ENCODE measurements at regions of chr3 and their contacts with region 1.

Region 1: GRCh38 chr3:131880948-131881347 is 153.9 kb downstream of the CPNE4 start:
- DNase-seq: no peak
- H3K4me3 ChIP-seq: no peak overlapping the region
- H3K27ac ChIP-seq: no peak overlapping the region
- H3K4me1 ChIP-seq: no peaks in the 10 kb centered on the region
- H3K27me3 ChIP-seq: no peaks in the 10 kb centered on the region
- CTCF ChIP-seq: no peak
- EP300 ChIP-seq: no peak
- POLR2A ChIP-seq: no peak
- RAD21 ChIP-seq: no peak

Region 2: DNA sequence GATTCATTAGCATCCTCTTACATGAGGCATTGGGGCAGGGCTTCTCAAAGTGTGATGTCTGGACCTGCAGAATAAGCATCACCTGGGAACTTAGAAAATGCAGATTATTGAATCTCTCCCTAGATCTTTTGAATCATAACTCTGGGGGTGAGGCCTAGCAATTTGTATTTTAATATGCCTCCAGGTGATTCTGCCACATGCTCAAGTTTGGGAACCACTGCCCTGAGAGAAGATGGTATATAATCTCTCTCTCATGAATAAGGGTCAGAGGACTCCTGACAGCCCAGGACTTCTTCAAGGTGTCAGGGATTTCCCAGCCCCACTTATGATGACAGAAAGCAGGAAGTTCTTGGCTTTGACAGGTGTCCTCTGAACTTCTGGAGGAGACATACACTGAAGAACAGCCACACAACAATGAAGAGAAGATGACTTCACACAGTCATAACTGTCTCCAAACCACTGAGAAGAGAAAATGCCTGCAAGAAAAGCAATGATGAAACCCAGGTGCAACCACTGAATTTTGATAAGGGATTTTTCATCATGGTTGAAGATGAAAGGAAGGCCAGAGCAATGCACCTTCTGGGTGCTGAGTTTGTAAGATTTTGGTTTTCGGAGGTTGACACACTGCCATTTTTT is 166.2 kb before region 1 on chr3:
- CTCF ChIA-PET with region 1: no interaction called
- POLR2A ChIA-PET with region 1: no interaction called
- DNase-seq: no peak
- H3K4me3 ChIP-seq: no peak overlapping the region
- H3K27ac ChIP-seq: no peak overlapping the region
- H3K4me1 ChIP-seq: peaks cover 2 to 6% (median 4%) of the 10 kb centered on the region in 4 experiments; a peak in 5 of 7 replicates
- H3K27me3 ChIP-seq: no peaks in the 10 kb centered on the region
- CTCF ChIP-seq: no peak
- EP300 ChIP-seq: no peak
- POLR2A ChIP-seq: no peak
- RAD21 ChIP-seq: no peak

Region 3: GRCh38 chr3:131892331-131892730 is 11.4 kb after region 1 on chr3:
- CTCF ChIA-PET with region 1: interaction called, 11 read pairs
- POLR2A ChIA-PET with region 1: no interaction called
- DNase-seq: no peak
- H3K4me3 ChIP-seq: no peak overlapping the region
- H3K27ac ChIP-seq: no peak overlapping the region
- H3K4me1 ChIP-seq: no peaks in the 10 kb centered on the region
- H3K27me3 ChIP-seq: no peaks in the 10 kb centered on the region
- CTCF ChIP-seq: no peak
- EP300 ChIP-seq: no peak
- POLR2A ChIP-seq: no peak
- RAD21 ChIP-seq: no peak